ENCODE measurements at regions of chr3 and their contacts with region 1.

Region 1: GRCh38 chr3:125437631-125438435 is 62.7 kb upstream of the ZNF148 start:
- DNase-seq: peak in 9 of 10 donors; percentile 36 to 93 (median 72)

Region 2: GRCh38 chr3:124928333-124929202 is 509.3 kb before region 1 on chr3:
- intact Hi-C with region 1: loop called (anchors 5 kb)
- DNase-seq: peak in 5 of 10 donors; percentile 40 to 67 (median 44)

Measured in posterior cingulate gyrus (tissue), 11 donors.